Caco-2 (cell line): ENCODE measurements at regions of chr4 and their contacts with region 1.

Region 1: DNA sequence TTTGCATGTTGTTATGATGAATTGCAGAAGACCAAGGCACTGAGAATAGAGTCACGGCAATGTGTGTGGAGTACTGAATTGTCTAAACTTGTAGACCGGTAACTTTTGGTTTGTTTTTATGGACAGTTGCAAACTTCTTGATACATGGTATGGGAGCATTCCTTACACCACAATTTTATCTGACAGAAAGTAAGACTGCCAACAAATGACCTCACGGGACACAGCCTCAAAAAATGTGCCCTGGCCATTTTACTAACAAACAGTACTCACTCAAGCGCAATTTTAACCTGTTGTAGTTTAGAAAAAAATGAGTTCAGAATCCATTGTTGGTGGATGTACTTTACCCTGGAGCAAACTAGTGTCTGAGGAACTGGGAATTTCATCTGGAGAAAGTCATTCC is 321.2 kb downstream of the CAMK2D start:
- DNase-seq: no peak
- H3K4me3 ChIP-seq: no peak overlapping the region
- H3K4me3 Mint-ChIP-seq: no peak overlapping the region
- H3K27ac Mint-ChIP-seq: no peak overlapping the region
- H3K4me1 ChIP-seq: no peaks in the 10 kb centered on the region
- H3K4me1 Mint-ChIP-seq: no peaks in the 10 kb centered on the region
- H3K27me3 ChIP-seq: no peaks in the 10 kb centered on the region
- H3K27me3 Mint-ChIP-seq: no peaks in the 10 kb centered on the region
- CTCF ChIP-seq: no peak

Region 2: GRCh38 chr4:113657586-113658233 is 217.3 kb after region 1 on chr4:
- CTCF ChIA-PET with region 1: no interaction called
- POLR2A ChIA-PET with region 1: no interaction called
- intact Hi-C with region 1: no loop called
- DNase-seq: no peak
- H3K4me3 ChIP-seq: no peak overlapping the region
- H3K4me3 Mint-ChIP-seq: no peak overlapping the region
- H3K27ac Mint-ChIP-seq: no peak overlapping the region
- H3K4me1 ChIP-seq: peaks cover 46% of the 10 kb centered on the region
- H3K4me1 Mint-ChIP-seq: peaks cover 34% of the 10 kb centered on the region
- H3K27me3 ChIP-seq: no peaks in the 10 kb centered on the region
- H3K27me3 Mint-ChIP-seq: no peaks in the 10 kb centered on the region
- CTCF ChIP-seq: no peak

Region 3: GRCh38 chr4:113837397-113837796 is 397.0 kb after region 1 on chr4:
- CTCF ChIA-PET with region 1: no interaction called
- POLR2A ChIA-PET with region 1: interaction called, 22 read pairs
- intact Hi-C with region 1: no loop called
- DNase-seq: no peak
- H3K4me3 ChIP-seq: no peak overlapping the region
- H3K4me3 Mint-ChIP-seq: no peak overlapping the region
- H3K27ac Mint-ChIP-seq: no peak overlapping the region
- H3K4me1 ChIP-seq: no peaks in the 10 kb centered on the region
- H3K4me1 Mint-ChIP-seq: peaks cover 7% of the 10 kb centered on the region
- H3K27me3 ChIP-seq: no peaks in the 10 kb centered on the region
- H3K27me3 Mint-ChIP-seq: peaks cover 6% of the 10 kb centered on the region
- CTCF ChIP-seq: no peak